K562 (cell line): ENCODE measurements at regions of chr11 and their contacts with region 1.

Region 1: DNA sequence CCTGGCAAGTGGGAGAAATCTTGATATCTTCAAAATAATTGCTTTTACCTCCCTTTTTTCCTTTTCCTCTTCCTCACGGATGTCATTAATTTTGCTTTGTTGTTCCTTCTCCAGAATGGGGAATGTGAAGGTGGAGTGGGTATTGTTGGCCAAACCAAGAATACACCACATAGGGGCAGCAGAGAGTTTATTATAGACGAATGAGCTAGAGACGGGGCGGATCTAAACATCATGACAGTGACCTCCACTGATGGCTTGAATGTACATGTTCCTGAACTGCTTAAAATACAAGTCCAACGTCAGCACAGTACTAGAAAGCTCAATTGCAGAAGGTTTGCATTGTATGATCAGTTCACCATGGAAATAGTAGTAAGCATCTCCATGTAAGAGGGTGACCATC is 122.3 kb upstream of the SNX19 start:
- DNase-seq: peak; percentile 12 to 36 (median 22)
- ATAC-seq: peak; percentile 80
- H3K4me3 ChIP-seq: no peak overlapping the region
- H3K27ac ChIP-seq: no peak overlapping the region
- H3K4me1 ChIP-seq: no peaks in the 10 kb centered on the region
- H3K27me3 ChIP-seq: no peaks in the 10 kb centered on the region
- CTCF ChIP-seq: peak in 2 of 3 experiments; percentile 14 to 31; a peak in 1 of 6 replicates
- EP300 ChIP-seq: no peak
- POLR2A ChIP-seq: no peak
- RAD21 ChIP-seq: no peak

Region 2: DNA sequence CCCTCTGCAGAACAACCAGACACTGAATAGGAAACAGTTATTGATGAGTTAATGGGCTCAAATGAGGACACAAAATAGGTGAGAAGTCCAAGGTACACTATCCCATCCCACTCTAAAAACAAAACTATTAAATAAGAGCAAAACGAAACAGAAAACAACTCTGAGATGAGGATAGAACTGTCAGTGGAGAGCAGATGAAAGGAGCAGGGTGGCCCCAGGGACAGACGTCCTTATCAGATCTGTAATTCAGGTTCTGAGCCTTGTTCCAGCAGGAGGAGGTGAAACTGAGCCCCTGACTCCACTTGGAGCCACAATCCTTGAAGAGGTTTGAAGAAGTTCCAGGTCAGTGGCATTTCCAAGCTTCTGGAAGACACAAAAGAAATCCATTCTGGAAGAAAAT is 113.8 kb before region 1 on chr11:
- CTCF ChIA-PET with region 1: no interaction called
- POLR2A ChIA-PET with region 1: no interaction called
- in situ Hi-C with region 1: no loop called
- intact Hi-C with region 1: loop called (anchors 10 kb)
- DNase-seq: no peak
- ATAC-seq: no peak
- H3K4me3 ChIP-seq: no peak overlapping the region
- H3K27ac ChIP-seq: no peak overlapping the region
- H3K4me1 ChIP-seq: peaks cover 0 to 3% of the 10 kb centered on the region in 2 experiments; a peak in 1 of 5 replicates
- H3K27me3 ChIP-seq: no peaks in the 10 kb centered on the region; a peak in 1 of 5 replicates
- CTCF ChIP-seq: no peak
- EP300 ChIP-seq: no peak
- POLR2A ChIP-seq: no peak
- RAD21 ChIP-seq: no peak

Region 3: GRCh38 chr11:130945896-130946295 is 92.7 kb before region 1 on chr11:
- CTCF ChIA-PET with region 1: no interaction called
- POLR2A ChIA-PET with region 1: no interaction called
- in situ Hi-C with region 1: no loop called
- intact Hi-C with region 1: no loop called
- DNase-seq: no peak
- ATAC-seq: no peak
- H3K4me3 ChIP-seq: no peak overlapping the region
- H3K27ac ChIP-seq: no peak overlapping the region
- H3K4me1 ChIP-seq: no peaks in the 10 kb centered on the region
- H3K27me3 ChIP-seq: no peaks in the 10 kb centered on the region
- CTCF ChIP-seq: no peak
- EP300 ChIP-seq: no peak
- POLR2A ChIP-seq: no peak
- RAD21 ChIP-seq: no peak